Gastrocnemius medialis (tissue), 4 donors: ENCODE measurements at regions of chr19 and their contacts with region 1.

Region 1: GRCh38 chr19:38452428-38453366 is 19.2 kb downstream of the RYR1 start:
- DNase-seq: peak; percentile 64 to 87
- ATAC-seq: peak; percentile 44 to 52
- H3K4me3 ChIP-seq: no peak overlapping the region
- H3K27ac ChIP-seq: peak overlapping the region; percentile 65 to 83 (median 77)
- H3K4me1 ChIP-seq: peaks cover 4% of the 10 kb centered on the region in 2 donors
- H3K27me3 ChIP-seq: no peaks in the 10 kb centered on the region
- CTCF ChIP-seq: no peak
- POLR2A ChIP-seq: no peak

Region 2: DNA sequence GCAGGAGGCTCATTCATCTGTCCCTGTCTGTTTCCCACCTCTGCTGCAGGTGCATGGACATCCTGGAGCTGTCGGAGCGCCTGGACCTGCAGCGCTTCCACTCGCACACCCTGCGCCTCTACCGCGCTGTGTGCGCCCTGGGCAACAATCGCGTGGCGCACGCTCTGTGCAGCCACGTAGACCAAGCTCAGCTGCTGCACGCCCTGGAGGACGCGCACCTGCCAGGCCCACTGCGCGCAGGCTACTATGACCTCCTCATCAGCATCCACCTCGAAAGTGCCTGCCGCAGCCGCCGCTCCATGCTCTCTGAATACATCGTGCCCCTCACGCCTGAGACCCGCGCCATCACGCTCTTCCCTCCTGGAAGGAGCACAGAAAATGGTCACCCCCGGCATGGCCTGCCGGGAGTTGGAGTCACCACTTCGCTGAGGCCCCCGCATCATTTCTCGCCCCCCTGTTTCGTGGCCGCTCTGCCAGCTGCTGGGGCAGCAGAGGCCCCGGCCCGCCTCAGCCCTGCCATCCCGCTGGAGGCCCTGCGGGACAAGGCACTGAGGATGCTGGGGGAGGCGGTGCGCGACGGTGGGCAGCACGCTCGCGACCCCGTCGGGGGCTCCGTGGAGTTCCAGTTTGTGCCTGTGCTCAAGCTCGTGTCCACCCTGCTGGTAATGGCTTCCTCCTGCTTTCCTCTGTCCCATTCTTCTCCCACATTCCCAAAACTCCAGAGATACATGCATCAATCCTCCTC is 33.0 kb after region 1 on chr19:
- in situ Hi-C with region 1: no loop called
- intact Hi-C with region 1: loop called (anchors 5 kb)
- DNase-seq: no peak
- ATAC-seq: no peak
- H3K4me3 ChIP-seq: no peak overlapping the region
- H3K27ac ChIP-seq: no peak overlapping the region
- H3K4me1 ChIP-seq: no peaks in the 10 kb centered on the region
- H3K27me3 ChIP-seq: no peaks in the 10 kb centered on the region
- CTCF ChIP-seq: no peak
- POLR2A ChIP-seq: no peak

Region 3: DNA sequence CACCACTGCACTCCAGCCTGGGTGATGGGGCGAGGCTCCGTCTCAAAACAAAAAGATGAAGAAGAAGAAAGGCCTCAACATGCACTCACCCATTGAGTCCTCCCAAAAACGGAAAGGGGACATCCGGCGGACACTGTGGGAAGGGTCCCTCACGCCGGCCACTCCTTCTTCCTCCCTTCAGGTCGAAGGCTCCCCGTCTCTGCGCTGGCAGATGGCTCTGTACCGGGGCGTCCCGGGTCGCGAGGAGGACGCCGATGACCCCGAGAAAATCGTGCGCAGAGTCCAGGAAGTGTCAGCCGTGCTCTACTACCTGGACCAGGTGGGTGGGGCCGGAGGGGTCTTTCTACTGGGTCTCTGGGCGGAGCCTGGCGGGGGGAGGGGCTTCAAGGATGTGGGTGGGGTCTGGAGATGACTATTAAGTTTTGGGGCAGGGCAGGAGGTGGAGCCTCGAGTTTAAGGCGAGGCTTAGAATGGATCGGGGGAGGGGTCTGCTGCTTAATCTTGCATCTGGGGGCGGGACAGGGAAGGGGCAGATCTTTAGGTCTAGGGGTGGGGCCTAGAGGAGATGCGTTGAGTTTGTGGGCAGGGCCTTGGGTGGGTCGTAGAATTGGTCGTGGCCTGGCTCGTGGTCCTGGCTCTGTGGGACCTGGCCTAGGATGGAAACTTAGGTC is 74.9 kb after region 1 on chr19:
- in situ Hi-C with region 1: no loop called
- intact Hi-C with region 1: no loop called
- DNase-seq: no peak
- ATAC-seq: no peak
- H3K4me3 ChIP-seq: no peak overlapping the region
- H3K27ac ChIP-seq: peak overlapping the region in 2 of 4 donors; percentile 34 to 45
- H3K4me1 ChIP-seq: no peaks in the 10 kb centered on the region
- H3K27me3 ChIP-seq: no peaks in the 10 kb centered on the region
- CTCF ChIP-seq: no peak
- POLR2A ChIP-seq: no peak